Caco-2 (cell line): ENCODE measurements at regions of chr9 and their contacts with region 1.

Region 1: DNA sequence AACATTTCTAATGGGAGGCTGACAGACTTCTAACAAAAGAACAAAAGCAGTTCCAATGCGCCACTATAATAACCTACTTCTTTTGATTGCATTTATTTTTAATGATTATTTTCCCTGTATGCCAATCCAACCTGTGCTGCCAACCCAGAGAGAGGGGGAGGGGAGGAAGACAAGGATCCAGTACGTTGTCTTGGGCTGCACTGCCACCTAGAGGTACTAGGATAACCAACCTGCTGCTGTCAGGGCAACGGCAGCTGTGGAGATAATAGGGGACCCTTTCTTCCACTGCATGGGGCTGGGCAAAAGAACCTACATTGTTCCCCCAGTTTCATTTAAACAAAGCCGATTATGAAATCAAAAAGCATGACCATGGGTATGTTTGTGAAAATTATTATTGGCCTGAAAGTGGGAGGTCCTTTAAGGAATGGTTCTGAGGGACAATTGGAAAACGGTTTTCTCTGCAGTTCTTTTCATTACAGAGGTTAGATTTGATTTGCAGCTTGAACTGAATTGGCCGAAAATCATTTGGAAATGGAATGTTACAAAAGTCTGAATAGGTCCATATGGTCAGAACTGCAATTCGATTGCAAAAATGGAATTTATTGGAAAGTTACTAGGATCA is 101.3 kb downstream of the RASEF start:
- DNase-seq: peak; percentile 62 to 65
- H3K4me3 ChIP-seq: no peak overlapping the region
- H3K4me3 Mint-ChIP-seq: no peak overlapping the region
- H3K27ac Mint-ChIP-seq: no peak overlapping the region
- H3K4me1 ChIP-seq: no peaks in the 10 kb centered on the region
- H3K4me1 Mint-ChIP-seq: no peaks in the 10 kb centered on the region
- H3K27me3 ChIP-seq: no peaks in the 10 kb centered on the region
- H3K27me3 Mint-ChIP-seq: peaks cover 2% of the 10 kb centered on the region
- CTCF ChIP-seq: peak; percentile 64 to 68

Region 2: DNA sequence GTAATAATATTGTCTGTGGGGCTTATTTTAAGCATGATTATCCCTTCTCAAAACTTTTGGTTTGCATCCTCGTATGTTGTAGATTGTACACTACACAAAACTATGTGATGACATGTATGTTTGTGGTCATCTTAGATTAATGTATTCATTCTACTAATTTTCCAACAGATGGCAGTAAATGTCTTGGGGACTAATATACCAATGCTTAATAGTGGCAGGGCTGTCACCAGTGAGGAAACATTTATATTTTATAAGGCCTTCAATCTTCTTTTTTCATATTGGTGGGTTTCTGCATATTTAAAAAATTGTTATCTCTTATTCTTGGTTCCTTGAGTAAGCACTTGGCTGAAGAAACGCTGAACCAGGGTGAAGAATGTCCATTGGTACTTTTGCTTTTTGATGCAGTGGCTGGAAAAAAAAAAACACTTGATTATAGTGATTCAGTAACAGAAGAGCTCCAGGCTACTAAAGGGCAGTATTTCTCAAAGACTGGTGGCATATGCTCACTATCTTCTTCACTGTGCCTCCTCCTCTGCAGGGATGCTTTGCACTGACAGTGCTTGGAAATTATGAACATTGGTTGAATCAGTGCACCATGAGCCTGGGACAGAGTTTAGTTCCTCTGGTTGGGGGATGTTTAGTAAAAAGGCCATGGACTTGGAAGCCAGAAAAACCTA is 429.0 kb before region 1 on chr9:
- CTCF ChIA-PET with region 1: no interaction called
- POLR2A ChIA-PET with region 1: no interaction called
- intact Hi-C with region 1: loop called (anchors 1 kb)
- DNase-seq: no peak
- H3K4me3 ChIP-seq: no peak overlapping the region
- H3K4me3 Mint-ChIP-seq: no peak overlapping the region
- H3K27ac Mint-ChIP-seq: no peak overlapping the region
- H3K4me1 ChIP-seq: no peaks in the 10 kb centered on the region; the same call in 1 of the 2 replicates
- H3K4me1 Mint-ChIP-seq: no peaks in the 10 kb centered on the region
- H3K27me3 ChIP-seq: no peaks in the 10 kb centered on the region
- H3K27me3 Mint-ChIP-seq: no peaks in the 10 kb centered on the region
- CTCF ChIP-seq: no peak